ENCODE measurements at regions of chr7 and their contacts with region 1.

Region 1: GRCh38 chr7:95865716-95866371 is 93.5 kb downstream of the DYNC1I1 start:
- DNase-seq: no peak
- H3K4me3 ChIP-seq: no peak overlapping the region
- CTCF ChIP-seq: peak; percentile 17

Region 2: GRCh38 chr7:95723592-95724180 is 142.2 kb before region 1 on chr7:
- CTCF ChIA-PET with region 1: interaction called, 44 read pairs
- POLR2A ChIA-PET with region 1: no interaction called
- DNase-seq: no peak
- H3K4me3 ChIP-seq: no peak overlapping the region
- CTCF ChIP-seq: no peak

Region 3: GRCh38 chr7:95847061-95847460 is 18.8 kb before region 1 on chr7:
- CTCF ChIA-PET with region 1: no interaction called
- POLR2A ChIA-PET with region 1: no interaction called
- DNase-seq: no peak
- H3K4me3 ChIP-seq: no peak overlapping the region
- CTCF ChIP-seq: no peak

Measured in AG04449 (cell line).